ENCODE measurements at regions of chr3 and their contacts with region 1.

Region 1: DNA sequence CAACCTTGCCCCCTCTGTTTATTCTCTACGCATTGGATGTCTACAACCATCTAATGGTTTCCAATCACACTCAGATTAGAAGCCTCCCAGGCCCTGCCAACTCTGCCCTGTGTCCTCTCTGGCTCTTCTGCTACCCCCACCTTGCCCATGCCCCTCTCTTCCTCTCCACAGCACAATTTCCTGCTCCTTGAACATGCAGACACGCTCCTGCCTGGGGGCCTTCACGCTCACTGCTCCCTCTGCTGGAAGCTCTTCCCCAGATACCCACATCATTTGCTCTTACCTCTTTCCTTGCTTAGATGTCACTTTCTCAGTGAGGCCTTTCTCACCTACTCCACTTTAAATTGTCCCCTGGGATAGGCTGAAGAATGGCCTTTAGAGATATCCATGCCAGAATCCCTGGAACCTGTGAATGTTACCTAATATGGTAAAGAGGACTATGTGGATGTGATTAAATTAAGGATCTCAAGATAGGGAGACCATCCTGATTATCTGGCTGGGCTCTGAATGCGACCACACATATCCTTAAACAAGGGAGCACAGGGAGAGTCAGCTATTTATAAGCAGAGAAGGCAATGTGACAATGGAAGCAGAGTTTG is 9.9 kb downstream of the KY start:
- DNase-seq: no peak
- H3K4me3 ChIP-seq: no peak overlapping the region
- H3K27ac ChIP-seq: no peak overlapping the region
- H3K27me3 ChIP-seq: peaks cover 4% of the 10 kb centered on the region
- CTCF ChIP-seq: peak; percentile 73

Region 2: DNA sequence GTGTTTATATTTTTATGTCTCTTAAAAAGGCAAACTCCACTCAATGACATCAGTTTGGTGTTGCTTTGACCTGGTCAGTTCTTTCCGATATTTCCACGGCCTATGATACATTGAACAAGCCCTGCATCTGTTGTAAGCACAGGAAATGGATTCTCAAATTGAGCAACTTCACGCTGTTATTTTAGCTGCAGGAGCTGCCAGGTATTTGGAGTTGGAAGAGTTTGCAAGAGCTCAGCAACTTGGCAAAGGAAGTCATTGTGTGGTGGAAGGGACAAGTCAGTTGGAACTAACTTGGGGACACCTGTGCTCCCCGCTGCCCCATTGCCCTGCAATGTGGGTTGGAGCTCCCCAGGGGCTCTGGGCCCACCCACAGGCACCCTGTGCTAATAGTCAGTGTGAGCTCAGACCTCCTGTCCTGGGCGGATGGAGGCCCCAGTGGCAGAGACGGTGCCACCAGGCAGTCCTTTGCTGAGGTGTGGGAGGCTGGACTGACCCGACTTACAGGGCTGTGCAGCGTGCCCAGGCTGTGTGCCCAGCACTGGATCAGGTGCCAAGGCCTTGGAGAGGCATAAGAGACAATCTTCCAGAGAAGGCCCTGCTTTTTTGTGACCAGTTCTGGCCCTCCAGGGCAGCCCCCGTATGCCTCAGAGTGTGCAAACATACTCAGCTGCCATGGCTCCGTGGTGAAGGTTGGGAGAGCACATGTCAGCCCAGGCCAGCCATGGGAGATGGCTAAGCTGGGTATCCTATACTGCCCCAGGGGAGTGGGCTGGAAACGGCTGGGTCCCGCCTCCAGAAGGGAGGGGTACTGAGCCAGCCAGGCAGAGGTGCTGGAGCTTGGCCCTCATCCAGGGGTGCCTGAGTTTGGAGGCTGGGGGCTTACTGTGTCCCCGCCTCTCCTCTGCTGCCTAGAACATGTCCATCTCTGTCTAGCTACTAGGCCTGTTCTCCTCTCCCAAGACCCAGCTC is 33.6 kb before region 1 on chr3:
- CTCF ChIA-PET with region 1: interaction called, 124 read pairs
- POLR2A ChIA-PET with region 1: no interaction called
- DNase-seq: no peak
- H3K4me3 ChIP-seq: no peak overlapping the region
- H3K27ac ChIP-seq: no peak overlapping the region
- H3K27me3 ChIP-seq: peaks cover 21% of the 10 kb centered on the region
- CTCF ChIP-seq: no peak

Region 3: GRCh38 chr3:134618478-134619300 is 22.3 kb before region 1 on chr3:
- CTCF ChIA-PET with region 1: interaction called, 17 read pairs
- POLR2A ChIA-PET with region 1: no interaction called
- DNase-seq: no peak
- H3K4me3 ChIP-seq: no peak overlapping the region
- H3K27ac ChIP-seq: no peak overlapping the region
- H3K27me3 ChIP-seq: no peaks in the 10 kb centered on the region
- CTCF ChIP-seq: no peak

Measured in AG04450 (cell line).